ENCODE measurements at regions of chr20 and their contacts with region 1.

Region 1: GRCh38 chr20:10434832-10435812 is at the start of gene SLX4IP:
- DNase-seq: peak; percentile 97
- H3K4me3 Mint-ChIP-seq: peak within 1 kb of the TSS; percentile 86
- H3K27ac Mint-ChIP-seq: peak within 1 kb of the TSS; percentile 94
- H3K4me1 Mint-ChIP-seq: peaks cover 12% of the 10 kb centered on the region
- H3K27me3 Mint-ChIP-seq: no peaks in the 10 kb centered on the region
- CTCF ChIP-seq: no peak
- total RNA-seq, gene SLX4IP: 11.2 and 12.9 TPM in 2 replicates

Region 2: DNA sequence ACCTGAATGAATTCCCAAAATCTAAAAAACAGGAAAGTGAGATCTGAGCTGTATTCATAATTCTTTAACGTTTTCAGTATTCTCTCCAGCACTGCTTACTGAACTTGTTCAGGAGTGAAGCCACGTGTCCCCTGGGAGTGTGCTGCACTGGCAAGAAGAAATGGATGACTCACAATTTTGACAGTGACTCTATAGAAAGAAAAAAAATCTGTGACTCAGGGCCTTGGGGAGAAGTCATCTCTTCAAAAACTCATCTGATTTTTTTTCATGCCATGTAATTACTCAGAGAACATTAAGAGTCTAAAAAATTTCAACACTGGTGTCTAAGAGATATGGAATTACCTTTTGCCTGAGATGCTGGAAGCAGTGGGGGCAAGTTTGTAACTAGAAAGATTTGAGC is 360.6 kb before region 1 on chr20:
- CTCF ChIA-PET with region 1: interaction called, 3 read pairs
- POLR2A ChIA-PET with region 1: interaction called, 26 read pairs
- intact Hi-C with region 1: no loop called
- DNase-seq: peak; percentile 89
- H3K4me3 Mint-ChIP-seq: peak overlapping the region; percentile 33
- H3K27ac Mint-ChIP-seq: peak overlapping the region; percentile 20
- H3K4me1 Mint-ChIP-seq: peaks cover 39% of the 10 kb centered on the region
- H3K27me3 Mint-ChIP-seq: no peaks in the 10 kb centered on the region
- CTCF ChIP-seq: no peak

Region 3: DNA sequence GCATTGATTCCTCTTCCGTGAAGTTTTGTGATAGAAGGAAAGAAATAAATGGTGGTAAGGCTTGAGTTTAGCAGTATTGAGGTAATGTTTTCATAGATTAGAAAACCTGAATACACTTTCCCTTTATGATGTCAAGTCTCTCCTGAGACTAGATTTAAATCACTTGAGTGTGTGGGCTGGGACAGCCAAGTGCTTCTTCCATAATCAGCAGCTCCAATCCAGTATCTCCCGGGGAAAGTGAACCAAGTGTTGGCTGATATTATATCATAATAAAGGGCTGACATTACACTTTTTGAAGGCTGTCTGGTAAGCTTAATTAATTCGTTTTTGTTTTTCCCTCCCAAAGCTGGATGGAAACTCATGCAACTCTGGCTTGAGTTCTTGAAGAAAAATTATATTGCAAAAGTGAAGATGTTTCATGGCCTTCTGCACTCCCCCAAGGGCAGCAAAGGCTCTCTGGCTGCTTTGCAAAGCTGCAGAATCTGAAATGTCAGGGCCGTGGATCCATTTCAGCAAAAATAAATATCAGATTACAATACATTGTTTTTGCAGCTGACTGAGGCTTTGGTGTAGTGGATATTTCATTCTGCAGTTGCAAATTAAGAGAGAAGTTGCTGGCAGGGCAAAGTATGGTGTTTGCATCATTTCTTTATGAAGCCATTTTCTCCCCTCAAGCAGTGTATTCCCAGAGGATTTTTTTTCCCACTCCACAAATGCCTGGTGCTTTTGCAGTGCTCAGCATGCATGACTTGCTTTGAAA is 102.3 kb before region 1 on chr20:
- CTCF ChIA-PET with region 1: no interaction called
- POLR2A ChIA-PET with region 1: no interaction called
- intact Hi-C with region 1: no loop called
- DNase-seq: peak; percentile 30
- H3K4me3 Mint-ChIP-seq: no peak overlapping the region
- H3K27ac Mint-ChIP-seq: no peak overlapping the region
- H3K4me1 Mint-ChIP-seq: peaks cover 6% of the 10 kb centered on the region
- H3K27me3 Mint-ChIP-seq: no peaks in the 10 kb centered on the region
- CTCF ChIP-seq: no peak

Region 4: GRCh38 chr20:10453241-10453640 is 18.1 kb after region 1 on chr20:
- CTCF ChIA-PET with region 1: no interaction called
- POLR2A ChIA-PET with region 1: interaction called, 28 read pairs
- intact Hi-C with region 1: no loop called
- DNase-seq: no peak
- H3K4me3 Mint-ChIP-seq: no peak overlapping the region
- H3K27ac Mint-ChIP-seq: no peak overlapping the region
- H3K4me1 Mint-ChIP-seq: peaks cover 16% of the 10 kb centered on the region
- H3K27me3 Mint-ChIP-seq: no peaks in the 10 kb centered on the region
- CTCF ChIP-seq: no peak

Region 5: GRCh38 chr20:10521068-10521831 is 86.1 kb after region 1 on chr20:
- CTCF ChIA-PET with region 1: interaction called, 3 read pairs
- POLR2A ChIA-PET with region 1: interaction called, 104 read pairs
- intact Hi-C with region 1: no loop called
- DNase-seq: peak; percentile 86
- H3K4me3 Mint-ChIP-seq: peak overlapping the region; percentile 24
- H3K27ac Mint-ChIP-seq: peak overlapping the region; percentile 83
- H3K4me1 Mint-ChIP-seq: peaks cover 61% of the 10 kb centered on the region
- H3K27me3 Mint-ChIP-seq: no peaks in the 10 kb centered on the region
- CTCF ChIP-seq: no peak

Region 6: GRCh38 chr20:10578607-10579006 is 143.5 kb after region 1 on chr20:
- CTCF ChIA-PET with region 1: no interaction called
- POLR2A ChIA-PET with region 1: interaction called, 10 read pairs
- intact Hi-C with region 1: no loop called
- DNase-seq: peak; percentile 54
- H3K4me3 Mint-ChIP-seq: no peak overlapping the region
- H3K27ac Mint-ChIP-seq: peak overlapping the region; percentile 71
- H3K4me1 Mint-ChIP-seq: peaks cover 32% of the 10 kb centered on the region
- H3K27me3 Mint-ChIP-seq: no peaks in the 10 kb centered on the region
- CTCF ChIP-seq: no peak

Region 7: GRCh38 chr20:10667077-10667401 is 231.9 kb after region 1 on chr20:
- CTCF ChIA-PET with region 1: interaction called, 7 read pairs
- POLR2A ChIA-PET with region 1: interaction called, 61 read pairs
- intact Hi-C with region 1: no loop called
- DNase-seq: peak; percentile 78
- H3K4me3 Mint-ChIP-seq: peak overlapping the region; percentile 33
- H3K27ac Mint-ChIP-seq: peak overlapping the region; percentile 68
- H3K4me1 Mint-ChIP-seq: peaks cover 46% of the 10 kb centered on the region
- H3K27me3 Mint-ChIP-seq: no peaks in the 10 kb centered on the region
- CTCF ChIP-seq: no peak